Psoas muscle (tissue), 8 donors: ENCODE measurements at regions of chr19 and their contacts with region 1.

Region 1: DNA sequence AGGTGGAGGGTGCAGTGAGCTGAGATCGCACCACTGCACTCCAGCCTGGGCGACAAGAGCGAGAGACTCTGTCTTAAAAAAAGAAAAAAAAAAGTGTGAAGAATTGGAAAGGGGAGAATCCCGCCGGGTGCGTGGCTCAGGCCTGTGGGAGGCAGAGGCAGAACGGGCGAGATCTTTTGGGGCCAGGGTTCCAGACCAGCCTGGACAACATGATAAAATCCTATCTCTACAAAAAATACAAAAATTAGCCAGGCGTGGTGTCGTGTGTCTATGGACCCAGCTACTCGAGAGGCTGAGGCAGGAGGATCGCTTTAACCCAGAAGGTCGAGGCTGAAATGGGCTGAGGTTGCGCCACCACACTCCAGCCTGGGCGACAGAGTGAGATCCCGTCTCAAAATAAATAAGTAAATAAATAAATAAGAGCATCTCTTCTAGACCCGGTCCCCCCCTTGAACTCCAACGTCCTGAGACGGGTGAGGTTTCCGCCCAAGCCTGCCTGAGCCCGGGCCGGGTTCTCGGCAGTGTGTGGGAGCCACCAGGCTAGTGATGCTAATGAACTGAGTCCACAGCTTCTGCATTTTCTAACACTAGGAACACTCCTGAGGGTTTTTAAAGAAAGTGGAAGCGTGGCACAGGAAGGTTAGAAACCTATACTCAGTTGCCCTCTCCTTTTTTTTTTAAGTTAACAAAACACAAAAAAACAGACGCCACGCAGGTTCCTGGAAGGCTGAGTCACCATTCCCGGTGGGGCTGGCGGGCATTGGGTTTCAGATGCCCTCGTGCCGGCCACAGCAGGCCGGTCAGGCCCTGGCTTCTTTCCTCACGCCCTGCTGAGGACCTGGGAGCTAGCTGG is 22.0 kb downstream of the GPX4 start:
- DNase-seq: peak in 1 of 2 donors; percentile 60
- ATAC-seq: peak; percentile 53 to 77 (median 62)
- H3K4me3 ChIP-seq: no peak overlapping the region
- H3K27ac ChIP-seq: peak overlapping the region; percentile 79
- H3K4me1 ChIP-seq: peaks cover 19% of the 10 kb centered on the region
- H3K27me3 ChIP-seq: no peaks in the 10 kb centered on the region
- CTCF ChIP-seq: no peak

Region 2: DNA sequence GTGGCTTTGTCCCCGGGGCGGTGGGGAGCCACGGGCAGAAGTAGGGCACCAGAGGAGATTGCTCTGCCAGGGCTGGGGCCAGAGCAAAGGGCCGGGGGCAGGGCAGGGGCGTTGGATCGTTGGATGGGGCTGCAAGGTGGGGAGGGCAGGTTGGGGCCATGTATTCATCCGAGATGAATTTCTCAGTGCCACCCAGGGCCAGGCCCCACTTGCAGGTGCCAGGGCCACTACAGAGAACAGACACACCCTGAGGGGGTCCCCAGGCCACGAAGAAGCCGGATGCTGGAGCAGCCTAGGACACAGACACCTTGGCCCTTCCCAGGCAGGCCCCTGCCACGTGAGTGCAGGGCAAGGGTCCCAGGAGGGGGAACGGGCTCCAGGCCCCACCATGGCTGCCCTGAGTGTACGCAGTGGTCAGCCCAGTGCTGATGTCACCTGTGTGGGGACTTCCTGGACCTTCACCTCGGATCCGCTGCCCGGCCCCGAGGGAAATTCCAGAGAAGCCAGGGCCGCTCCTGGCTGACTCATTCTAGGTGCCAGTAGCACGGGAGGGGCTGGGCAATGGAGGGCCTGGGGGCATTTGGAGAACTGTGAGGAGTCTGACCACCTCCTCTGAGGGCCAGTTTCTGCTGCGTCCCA is 57.8 kb after region 1 on chr19:
- intact Hi-C with region 1: loop called in 1 of 2 experiments (anchors 5 kb)
- DNase-seq: peak in 1 of 2 donors; percentile 46
- ATAC-seq: peak in 1 of 4 donors; percentile 15
- H3K4me3 ChIP-seq: no peak overlapping the region
- H3K27ac ChIP-seq: no peak overlapping the region
- H3K4me1 ChIP-seq: no peaks in the 10 kb centered on the region
- H3K27me3 ChIP-seq: peaks cover 0 to 6% (median 2%) of the 10 kb centered on the region in 3 donors
- CTCF ChIP-seq: no peak

Region 3: GRCh38 chr19:1351381-1351851 is 225.6 kb after region 1 on chr19:
- intact Hi-C with region 1: no loop called
- DNase-seq: no peak
- ATAC-seq: no peak
- H3K4me3 ChIP-seq: no peak overlapping the region
- H3K27ac ChIP-seq: no peak overlapping the region
- H3K4me1 ChIP-seq: peaks cover 7% of the 10 kb centered on the region
- H3K27me3 ChIP-seq: peaks cover 0 to 4% (median 0%) of the 10 kb centered on the region in 3 donors
- CTCF ChIP-seq: no peak

Region 4: GRCh38 chr19:1455336-1456120 is 329.7 kb after region 1 on chr19:
- intact Hi-C with region 1: no loop called
- DNase-seq: peak in 1 of 2 donors; percentile 74
- ATAC-seq: peak; percentile 47 to 74 (median 66)
- H3K4me3 ChIP-seq: no peak overlapping the region
- H3K27ac ChIP-seq: no peak overlapping the region
- H3K4me1 ChIP-seq: no peaks in the 10 kb centered on the region
- H3K27me3 ChIP-seq: peaks cover 0 to 78% (median 53%) of the 10 kb centered on the region in 3 donors
- CTCF ChIP-seq: no peak